Tibial artery (tissue), 4 donors: ENCODE measurements at regions of chr16 and their contacts with region 1.

Region 1: GRCh38 chr16:8919934-8920462 is 37.8 kb downstream of the LITAFD start:
- DNase-seq: no peak
- H3K4me3 ChIP-seq: no peak overlapping the region
- H3K27ac ChIP-seq: no peak overlapping the region
- H3K4me1 ChIP-seq: no peaks in the 10 kb centered on the region
- H3K27me3 ChIP-seq: no peaks in the 10 kb centered on the region
- CTCF ChIP-seq: no peak

Region 2: GRCh38 chr16:8850279-8850885 is 69.6 kb before region 1 on chr16:
- intact Hi-C with region 1: no loop called
- DNase-seq: peak in 1 of 2 donors; percentile 73
- H3K4me3 ChIP-seq: no peak overlapping the region
- H3K27ac ChIP-seq: peak overlapping the region in 1 of 2 donors; percentile 7
- H3K4me1 ChIP-seq: peaks cover 0 to 8% (median 7%) of the 10 kb centered on the region in 4 donors
- H3K27me3 ChIP-seq: no peaks in the 10 kb centered on the region
- CTCF ChIP-seq: no peak

Region 3: DNA sequence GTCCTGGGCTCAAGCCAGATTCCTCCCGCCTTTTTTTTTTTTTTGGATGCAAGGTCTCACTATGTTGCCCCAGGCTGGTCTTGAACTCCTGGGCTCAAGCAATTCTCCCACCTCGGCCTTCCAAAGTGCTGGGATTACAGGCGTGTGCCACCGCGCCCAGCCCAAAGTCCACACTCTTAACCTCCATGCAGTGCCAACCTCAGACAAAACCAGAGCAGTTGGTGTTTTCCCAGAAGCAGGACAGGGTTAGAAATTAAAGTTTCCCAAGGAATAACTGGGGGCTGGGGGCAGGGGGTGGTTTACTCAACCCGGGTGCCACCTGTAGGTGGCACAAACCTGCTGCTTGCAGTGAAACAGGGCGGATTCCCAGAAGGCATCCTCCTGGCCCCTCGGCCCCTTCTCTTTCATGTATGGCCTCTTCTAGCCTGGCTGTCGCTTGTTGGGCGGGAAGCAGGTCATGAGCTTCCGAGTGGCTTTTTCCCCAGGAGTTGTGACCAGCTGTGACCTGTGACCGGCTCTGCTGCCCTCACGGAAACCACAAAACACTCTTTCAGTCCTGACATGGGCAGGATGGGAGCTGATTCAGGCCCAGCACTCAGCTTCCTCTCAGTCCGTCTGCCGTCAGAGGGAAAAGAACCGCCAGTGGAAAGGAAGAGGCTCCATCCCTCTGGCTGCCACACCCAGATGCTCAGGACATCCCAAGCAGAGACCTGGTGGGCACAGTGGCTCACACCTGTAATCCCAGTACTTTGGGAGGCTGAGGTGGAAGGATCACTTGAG is 69.3 kb after region 1 on chr16:
- intact Hi-C with region 1: no loop called
- DNase-seq: no peak
- H3K4me3 ChIP-seq: no peak overlapping the region
- H3K27ac ChIP-seq: no peak overlapping the region
- H3K4me1 ChIP-seq: no peaks in the 10 kb centered on the region
- H3K27me3 ChIP-seq: peaks cover 0 to 10% of the 10 kb centered on the region in 2 donors
- CTCF ChIP-seq: no peak

Region 4: GRCh38 chr16:9008601-9009260 is 88.7 kb after region 1 on chr16:
- intact Hi-C with region 1: loop called (anchors 10 kb)
- DNase-seq: peak; percentile 63 to 79
- H3K4me3 ChIP-seq: peak overlapping the region; percentile 21 to 32
- H3K27ac ChIP-seq: no peak overlapping the region
- H3K4me1 ChIP-seq: peaks cover 0 to 10% (median 9%) of the 10 kb centered on the region in 4 donors
- H3K27me3 ChIP-seq: peaks cover 0 to 30% of the 10 kb centered on the region in 2 donors
- CTCF ChIP-seq: peak; percentile 74